Transverse colon (tissue), 4 donors: ENCODE measurements at regions of chrX and their contacts with region 1.

Region 1: GRCh38 chrX:120294651-120295050 is 16.6 kb downstream of the TMEM255A start:
- DNase-seq: no peak
- H3K4me3 ChIP-seq: no peak overlapping the region
- H3K27ac ChIP-seq: no peak overlapping the region
- H3K4me1 ChIP-seq: no peaks in the 10 kb centered on the region
- H3K27me3 ChIP-seq: no peaks in the 10 kb centered on the region
- CTCF ChIP-seq: no peak
- EP300 ChIP-seq: no peak
- POLR2A ChIP-seq: no peak

Region 2: DNA sequence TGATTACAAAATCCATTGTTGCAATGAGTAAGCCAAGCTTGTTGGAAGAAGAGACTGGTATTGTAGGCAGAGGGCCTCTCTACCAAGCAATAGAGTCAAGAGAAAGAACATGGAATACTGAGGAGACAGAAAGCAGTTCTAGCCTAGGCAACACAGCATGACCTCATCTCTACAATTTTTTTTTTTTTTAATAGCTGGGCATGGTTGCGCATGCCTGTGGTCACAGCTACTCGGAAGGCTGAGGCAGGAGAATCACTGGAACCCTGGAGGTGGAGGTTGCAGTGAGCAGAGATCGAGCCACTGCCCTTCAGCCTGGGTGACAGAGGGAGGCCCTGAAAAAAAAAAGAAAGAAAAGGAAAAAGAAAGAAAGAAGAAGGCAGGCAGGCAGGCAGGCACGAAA is 55.7 kb before region 1 on chrX:
- in situ Hi-C with region 1: no loop called
- intact Hi-C with region 1: loop called (anchors 2 kb)
- DNase-seq: no peak
- H3K4me3 ChIP-seq: no peak overlapping the region
- H3K27ac ChIP-seq: no peak overlapping the region
- H3K4me1 ChIP-seq: peaks cover 1 to 7% (median 4%) of the 10 kb centered on the region in 4 donors
- H3K27me3 ChIP-seq: no peaks in the 10 kb centered on the region
- CTCF ChIP-seq: no peak
- EP300 ChIP-seq: no peak
- POLR2A ChIP-seq: no peak

Region 3: GRCh38 chrX:120262859-120263708 is 31.6 kb before region 1 on chrX:
- in situ Hi-C with region 1: no loop called
- intact Hi-C with region 1: loop called (anchors 1 kb)
- DNase-seq: no peak
- H3K4me3 ChIP-seq: no peak overlapping the region
- H3K27ac ChIP-seq: no peak overlapping the region
- H3K4me1 ChIP-seq: no peaks in the 10 kb centered on the region
- H3K27me3 ChIP-seq: no peaks in the 10 kb centered on the region
- CTCF ChIP-seq: no peak
- EP300 ChIP-seq: no peak
- POLR2A ChIP-seq: no peak

Region 4: GRCh38 chrX:120419463-120419862 is 124.8 kb after region 1 on chrX:
- in situ Hi-C with region 1: no loop called
- intact Hi-C with region 1: no loop called
- DNase-seq: peak; percentile 10
- H3K4me3 ChIP-seq: no peak overlapping the region
- H3K27ac ChIP-seq: no peak overlapping the region
- H3K4me1 ChIP-seq: no peaks in the 10 kb centered on the region
- H3K27me3 ChIP-seq: no peaks in the 10 kb centered on the region
- CTCF ChIP-seq: no peak
- EP300 ChIP-seq: no peak
- POLR2A ChIP-seq: no peak